Mammary epithelial cell (primary cell): ENCODE measurements at regions of chr19 and their contacts with region 1.

Region 1: GRCh38 chr19:18940769-18941407 is at the start of gene HOMER3:
- DNase-seq: no peak
- H3K4me3 ChIP-seq: peak within 1 kb of the TSS; percentile 82 to 97 (median 87)
- H3K27ac ChIP-seq: peak within 1 kb of the TSS; percentile 68
- H3K4me1 ChIP-seq: peaks cover 13% of the 10 kb centered on the region
- H3K27me3 ChIP-seq: no peaks in the 10 kb centered on the region
- CTCF ChIP-seq: peak; percentile 4 to 48
- total RNA-seq, gene HOMER3: 114 to 138 TPM

Region 2: GRCh38 chr19:18879579-18880373 is 61.1 kb before region 1 on chr19:
- CTCF ChIA-PET with region 1: no interaction called
- dilution Hi-C with region 1: no loop called
- in situ Hi-C with region 1: no loop called
- intact Hi-C with region 1: no loop called
- DNase-seq: peak; percentile 30
- H3K4me3 ChIP-seq: no peak overlapping the region
- H3K27ac ChIP-seq: no peak overlapping the region
- H3K4me1 ChIP-seq: no peaks in the 10 kb centered on the region
- H3K27me3 ChIP-seq: no peaks in the 10 kb centered on the region
- CTCF ChIP-seq: no peak

Region 3: DNA sequence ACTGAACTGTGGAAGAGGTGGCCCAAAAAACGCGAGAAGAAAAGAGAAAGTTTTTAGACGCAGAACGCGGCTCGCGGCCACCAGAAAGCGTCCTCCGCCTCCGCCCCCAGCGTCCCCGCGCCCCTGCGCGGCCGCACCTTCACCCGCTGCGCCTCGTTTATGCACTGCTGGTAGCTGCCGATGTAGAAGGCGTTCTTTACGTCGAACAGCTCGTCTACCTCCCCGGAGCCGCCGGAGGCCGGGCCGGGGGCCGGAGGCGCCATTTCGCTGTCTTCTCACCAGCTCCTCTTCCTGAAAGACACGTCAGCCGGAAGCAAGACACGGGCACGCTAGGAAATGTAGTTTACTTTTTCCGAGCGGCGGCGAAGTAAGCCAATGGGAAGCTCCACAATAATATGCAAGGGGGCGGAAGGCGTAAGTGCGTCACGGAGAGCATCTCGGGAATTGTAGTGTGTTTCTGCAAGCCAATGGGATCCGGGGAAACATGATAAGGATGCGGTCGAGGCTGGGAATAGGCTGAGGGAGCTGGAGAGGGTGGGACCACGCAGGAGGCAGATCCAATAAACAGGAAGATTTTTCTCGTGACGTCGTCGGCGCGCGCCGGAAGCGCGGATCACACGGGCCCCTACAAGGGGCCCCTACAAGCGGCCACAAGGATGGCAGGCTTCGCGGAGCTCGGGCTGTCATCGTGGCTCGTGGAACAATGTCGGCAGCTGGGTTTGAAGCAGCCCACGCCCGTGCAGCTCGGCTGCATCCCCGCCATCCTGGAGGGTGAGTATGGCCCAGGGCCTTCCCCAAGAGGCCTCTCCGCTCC is 21.6 kb before region 1 on chr19 and contains the starts of genes COPE and DDX49:
- CTCF ChIA-PET with region 1: no interaction called
- dilution Hi-C with region 1: no loop called
- in situ Hi-C with region 1: no loop called
- intact Hi-C with region 1: loop called (anchors 1 kb)
- DNase-seq: peak; percentile 100
- H3K4me3 ChIP-seq: peak within 1 kb of the TSS; percentile 77 to 96 (median 85)
- H3K27ac ChIP-seq: peak within 1 kb of the TSS; percentile 90
- H3K4me1 ChIP-seq: peaks cover 15% of the 10 kb centered on the region
- H3K27me3 ChIP-seq: no peaks in the 10 kb centered on the region
- CTCF ChIP-seq: peak in 1 of 2 donors; percentile 10
- total RNA-seq, gene COPE: 180 to 226 TPM
- total RNA-seq, gene DDX49: 44.2 to 47.7 TPM

Region 4: DNA sequence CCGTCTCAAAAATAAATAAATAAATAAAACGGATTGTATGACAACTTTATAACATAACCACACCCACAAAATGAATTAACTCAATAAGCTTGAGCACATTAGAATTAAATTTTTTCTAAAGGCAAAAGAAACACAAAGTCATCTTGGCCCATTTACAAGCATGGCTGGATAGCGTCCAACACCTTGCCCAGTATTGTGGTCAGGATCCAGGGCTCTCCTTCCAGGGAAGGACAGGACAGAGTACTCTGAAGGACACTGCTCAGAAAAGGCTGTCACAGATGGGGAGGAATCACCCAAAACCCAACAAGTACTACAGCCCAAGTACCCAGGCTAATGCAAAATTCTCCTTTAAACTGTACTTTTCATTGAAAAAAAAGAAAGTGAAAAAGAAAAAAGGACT is 65.3 kb after region 1 on chr19:
- CTCF ChIA-PET with region 1: no interaction called
- dilution Hi-C with region 1: no loop called
- in situ Hi-C with region 1: no loop called
- intact Hi-C with region 1: no loop called
- DNase-seq: no peak
- H3K4me3 ChIP-seq: no peak overlapping the region
- H3K27ac ChIP-seq: no peak overlapping the region
- H3K4me1 ChIP-seq: no peaks in the 10 kb centered on the region
- H3K27me3 ChIP-seq: no peaks in the 10 kb centered on the region
- CTCF ChIP-seq: no peak

Region 5: DNA sequence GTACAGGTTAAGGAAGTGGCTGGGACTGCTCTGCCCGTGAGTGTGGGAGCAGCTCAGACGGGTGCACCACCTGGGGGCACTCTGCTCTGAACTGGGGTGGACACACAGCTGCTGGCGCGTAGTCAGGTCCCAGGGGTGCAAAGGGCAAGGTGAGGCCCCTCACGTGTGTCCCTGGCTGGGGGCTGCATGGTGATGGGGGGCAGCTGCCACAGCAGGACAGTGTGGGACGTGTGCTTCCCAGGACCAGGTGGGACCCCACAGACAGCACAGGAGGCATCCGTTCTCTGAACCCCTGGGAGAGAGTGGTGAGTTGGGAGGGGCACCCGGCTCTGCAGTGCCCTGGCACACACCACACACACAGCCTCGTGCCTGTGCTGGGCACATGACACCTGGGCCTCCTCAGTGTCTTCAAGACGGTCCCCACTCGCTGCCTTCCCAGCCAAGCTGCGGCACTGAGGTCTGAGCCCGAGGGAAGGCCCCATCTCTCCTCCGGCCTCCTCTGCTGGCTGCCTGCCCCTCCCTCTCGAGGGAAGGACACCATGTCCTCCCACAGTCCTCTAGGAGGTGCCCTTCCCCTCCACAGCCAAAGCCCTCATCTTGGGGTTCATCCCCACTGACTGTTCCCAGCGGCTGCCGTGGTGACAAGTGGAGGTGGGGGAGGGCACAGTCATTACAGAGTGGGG is 621.9 kb after region 1 on chr19:
- CTCF ChIA-PET with region 1: interaction called, 12 read pairs
- dilution Hi-C with region 1: no loop called
- in situ Hi-C with region 1: no loop called
- intact Hi-C with region 1: no loop called
- DNase-seq: no peak
- H3K4me3 ChIP-seq: no peak overlapping the region
- H3K27ac ChIP-seq: no peak overlapping the region
- H3K4me1 ChIP-seq: no peaks in the 10 kb centered on the region
- H3K27me3 ChIP-seq: no peaks in the 10 kb centered on the region
- CTCF ChIP-seq: peak in 1 of 2 donors; percentile 12